Naive thymus-derived CD4-positive, alpha-beta T cell (primary cell): ENCODE measurements at regions of chr19 and their contacts with region 1.

Region 1: DNA sequence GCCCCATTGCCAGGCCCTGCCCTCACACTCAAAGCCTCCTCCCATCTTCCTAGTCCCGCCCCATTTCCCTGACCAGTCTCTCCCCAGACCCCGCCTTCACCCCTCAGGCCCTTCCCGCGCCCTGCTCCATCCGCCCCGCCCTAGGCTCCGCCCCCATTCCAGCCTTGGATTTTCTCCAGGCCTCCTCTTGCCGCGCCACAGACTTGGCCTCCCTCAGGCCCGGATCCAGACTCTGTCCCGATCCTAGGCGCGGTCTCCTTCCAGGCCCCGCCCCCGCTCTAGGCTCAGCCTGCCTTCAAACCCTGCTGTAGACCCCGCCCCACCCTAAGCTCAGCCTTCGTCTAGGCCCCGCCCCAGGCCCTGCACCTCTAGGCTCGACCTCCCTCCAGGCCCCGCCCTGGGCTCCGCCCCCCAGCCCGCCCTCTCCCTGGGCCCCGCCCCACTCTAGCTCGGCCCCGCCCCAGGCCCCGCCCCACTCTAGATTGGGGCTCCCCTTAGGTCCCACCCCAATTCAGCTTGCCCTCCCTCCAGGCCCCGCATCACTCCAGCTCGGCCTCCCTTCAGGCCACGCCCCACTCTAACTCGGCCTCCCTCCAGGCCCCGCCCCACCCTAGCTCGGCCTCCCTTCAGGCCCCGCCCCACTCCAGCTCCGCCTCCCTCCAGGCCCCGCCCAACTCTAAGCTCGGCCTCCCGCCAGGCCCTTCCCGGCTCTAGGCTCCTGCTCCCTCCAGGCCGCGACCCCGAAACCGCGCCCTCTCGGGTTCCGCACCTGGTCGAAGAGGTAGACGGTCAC is 18.5 kb downstream of the LMTK3 start:
- DNase-seq: peak; percentile 69 to 87 (median 78)
- ATAC-seq: peak; percentile 87
- H3K4me3 ChIP-seq: peak overlapping the region; percentile 41
- H3K4me3 Mint-ChIP-seq: peak overlapping the region; percentile 58 to 84 (median 72)
- H3K27ac ChIP-seq: no peak overlapping the region
- H3K27ac Mint-ChIP-seq: peak overlapping the region; percentile 20 to 86 (median 67)
- H3K4me1 ChIP-seq: peaks cover 4 to 25% of the 10 kb centered on the region in 2 donors
- H3K4me1 Mint-ChIP-seq: peaks cover 17 to 51% (median 43%) of the 10 kb centered on the region in 7 donors
- H3K27me3 ChIP-seq: no peaks in the 10 kb centered on the region
- H3K27me3 Mint-ChIP-seq: peaks cover 0 to 57% (median 6%) of the 10 kb centered on the region in 5 donors

Region 2: GRCh38 chr19:48398375-48399235 is 94.5 kb before region 1 on chr19:
- CTCF ChIA-PET with region 1: no interaction called
- POLR2A ChIA-PET with region 1: no interaction called
- intact Hi-C with region 1: loop called (anchors 2 to 5 kb)
- DNase-seq: peak; percentile 77 to 88 (median 86)
- ATAC-seq: peak; percentile 90
- H3K4me3 ChIP-seq: peak overlapping the region; percentile 63
- H3K4me3 Mint-ChIP-seq: peak overlapping the region; percentile 54 to 96 (median 79)
- H3K27ac ChIP-seq: peak overlapping the region; percentile 59
- H3K27ac Mint-ChIP-seq: peak overlapping the region; percentile 22 to 97 (median 85)
- H3K4me1 ChIP-seq: peaks cover 17 to 29% of the 10 kb centered on the region in 2 donors
- H3K4me1 Mint-ChIP-seq: peaks cover 18 to 51% (median 41%) of the 10 kb centered on the region in 7 donors
- H3K27me3 ChIP-seq: peaks cover 9 to 21% of the 10 kb centered on the region in 2 donors
- H3K27me3 Mint-ChIP-seq: peaks cover 15 to 43% (median 31%) of the 10 kb centered on the region in 5 donors

Region 3: DNA sequence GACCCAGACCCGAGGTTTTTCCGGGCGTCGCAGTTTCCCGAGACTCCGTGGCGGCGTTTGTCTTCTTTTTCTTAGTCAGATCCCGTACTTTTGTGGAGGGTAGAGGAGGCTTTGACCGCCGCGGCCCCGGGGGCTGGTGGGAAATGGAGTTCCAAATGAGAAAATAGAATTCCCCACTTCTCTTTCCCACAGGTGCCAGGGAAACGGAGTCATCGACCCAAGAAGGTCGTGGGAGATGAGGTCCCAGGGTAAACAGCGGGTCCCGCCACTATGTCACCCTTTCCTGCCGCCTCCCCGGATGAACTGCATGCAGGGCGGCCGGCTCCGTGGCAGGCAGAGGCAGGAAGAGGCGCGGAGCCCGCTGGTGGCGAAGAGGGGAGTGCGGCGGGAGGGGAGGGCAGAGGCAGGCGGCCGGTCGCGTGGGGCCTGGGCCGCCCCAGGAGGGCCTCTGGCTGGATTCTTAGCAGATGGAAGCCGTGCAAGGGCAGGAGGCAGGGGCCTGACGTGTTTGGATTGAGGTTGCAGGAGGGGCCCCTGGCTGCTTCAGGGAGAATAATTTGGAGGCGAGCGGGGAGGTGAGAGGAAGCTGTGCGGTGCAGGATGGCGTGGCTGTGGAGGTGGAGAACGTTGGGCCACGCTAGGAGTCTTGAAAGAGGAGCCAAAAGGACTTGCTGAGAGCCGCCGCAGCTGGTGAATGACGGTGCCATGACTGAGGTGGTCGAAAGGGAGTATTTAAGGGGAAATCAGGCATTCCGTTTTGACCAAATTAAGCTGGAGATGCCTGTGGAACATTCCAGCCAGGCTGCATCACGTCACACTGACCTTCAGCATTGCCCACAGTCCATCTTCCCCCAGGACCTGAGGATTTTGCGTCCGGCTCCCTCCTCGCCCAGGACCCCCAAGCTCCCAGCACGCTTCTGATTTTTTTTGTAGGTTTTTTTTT is 12.3 kb before region 1 on chr19:
- CTCF ChIA-PET with region 1: interaction called, 9 read pairs
- POLR2A ChIA-PET with region 1: interaction called, 10 read pairs
- intact Hi-C with region 1: loop called in 1 of 2 experiments (anchors 1 kb)
- DNase-seq: peak; percentile 50 to 69 (median 58)
- ATAC-seq: peak; percentile 82
- H3K4me3 ChIP-seq: peak overlapping the region; percentile 68
- H3K4me3 Mint-ChIP-seq: peak overlapping the region; percentile 81 to 90 (median 86)
- H3K27ac ChIP-seq: peak overlapping the region; percentile 79
- H3K27ac Mint-ChIP-seq: peak overlapping the region in 8 of 9 donors; percentile 79 to 93 (median 88)
- H3K4me1 ChIP-seq: peaks cover 3 to 9% of the 10 kb centered on the region in 2 donors
- H3K4me1 Mint-ChIP-seq: peaks cover 6 to 29% (median 22%) of the 10 kb centered on the region in 7 donors
- H3K27me3 ChIP-seq: no peaks in the 10 kb centered on the region
- H3K27me3 Mint-ChIP-seq: no peaks in the 10 kb centered on the region

Region 4: DNA sequence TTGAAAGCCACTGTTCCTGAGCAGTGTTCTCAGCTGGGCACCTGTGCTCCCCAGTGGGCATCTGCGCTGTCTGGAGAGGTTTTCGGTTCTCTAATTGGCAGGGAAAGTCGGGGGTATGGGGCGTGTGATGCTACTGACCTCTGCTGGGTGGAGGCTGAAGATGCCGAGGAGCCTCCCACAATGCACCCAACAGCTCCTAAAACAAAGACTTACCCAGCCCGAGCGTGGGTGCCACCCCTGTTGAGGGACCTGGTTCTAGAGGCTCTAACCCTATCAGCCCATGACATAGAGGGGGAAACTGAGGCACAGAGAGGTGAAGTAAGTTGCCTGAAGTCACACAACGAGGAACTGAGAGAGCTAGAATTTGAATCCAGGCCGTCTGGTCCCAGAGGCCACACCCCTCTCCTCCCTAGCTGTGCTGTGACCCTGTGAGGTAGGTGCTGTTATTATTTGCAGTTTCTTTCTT is 115.7 kb after region 1 on chr19:
- CTCF ChIA-PET with region 1: interaction called, 16 read pairs
- POLR2A ChIA-PET with region 1: interaction called, 3 read pairs
- intact Hi-C with region 1: loop called in 1 of 2 experiments (anchors 1 kb)
- DNase-seq: peak in 7 of 9 donors; percentile 32 to 61 (median 55)
- ATAC-seq: peak; percentile 92
- H3K4me3 ChIP-seq: no peak overlapping the region
- H3K4me3 Mint-ChIP-seq: peak overlapping the region in 6 of 10 donors; percentile 16 to 61 (median 40)
- H3K27ac ChIP-seq: no peak overlapping the region
- H3K27ac Mint-ChIP-seq: peak overlapping the region in 4 of 9 donors; percentile 32 to 56 (median 46)
- H3K4me1 ChIP-seq: peaks cover 3 to 4% of the 10 kb centered on the region in 2 donors
- H3K4me1 Mint-ChIP-seq: peaks cover 2 to 6% (median 5%) of the 10 kb centered on the region in 7 donors
- H3K27me3 ChIP-seq: no peaks in the 10 kb centered on the region
- H3K27me3 Mint-ChIP-seq: no peaks in the 10 kb centered on the region